Activated CD4-positive, alpha-beta memory T cell treated with anti-CD3 and anti-CD28 coated beads for 36 hours (primary cell): ENCODE measurements at regions of chr6 and their contacts with region 1.

Region 1: GRCh38 chr6:3732345-3733141 is 19.0 kb downstream of the PXDC1 start:
- DNase-seq: peak; percentile 74
- H3K4me3 Mint-ChIP-seq: no peak overlapping the region
- H3K27ac Mint-ChIP-seq: no peak overlapping the region
- H3K4me1 Mint-ChIP-seq: peaks cover 3% of the 10 kb centered on the region
- H3K27me3 Mint-ChIP-seq: peaks cover 8% of the 10 kb centered on the region

Region 2: DNA sequence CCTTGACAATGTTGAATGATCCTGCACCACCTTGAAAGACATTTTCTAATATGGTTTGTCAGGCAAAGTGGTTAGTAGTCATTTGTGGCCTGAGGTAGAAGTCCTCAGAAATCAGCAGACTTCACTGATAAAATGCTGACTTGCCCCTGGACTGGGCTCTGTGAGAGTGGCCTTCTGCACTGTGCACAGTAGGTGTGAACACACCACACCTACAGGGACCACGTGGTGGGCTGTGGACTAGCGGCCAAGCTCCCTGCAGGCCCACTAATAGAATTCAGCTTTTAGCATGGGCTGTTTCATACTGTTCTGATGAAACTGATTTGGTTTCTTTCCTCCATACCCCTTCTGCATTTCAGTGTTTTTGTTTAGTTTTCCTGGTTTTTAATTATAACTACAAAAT is 606.7 kb before region 1 on chr6:
- CTCF ChIA-PET with region 1: no interaction called
- POLR2A ChIA-PET with region 1: no interaction called
- intact Hi-C with region 1: loop called (anchors 2 kb)
- DNase-seq: no peak
- H3K4me3 Mint-ChIP-seq: no peak overlapping the region
- H3K27ac Mint-ChIP-seq: no peak overlapping the region
- H3K4me1 Mint-ChIP-seq: peaks cover 7% of the 10 kb centered on the region
- H3K27me3 Mint-ChIP-seq: no peaks in the 10 kb centered on the region

Region 3: GRCh38 chr6:3273707-3274521 is 458.6 kb before region 1 on chr6:
- CTCF ChIA-PET with region 1: interaction called, 98 read pairs
- POLR2A ChIA-PET with region 1: no interaction called
- intact Hi-C with region 1: loop called (anchors 1 kb)
- DNase-seq: peak; percentile 30
- H3K4me3 Mint-ChIP-seq: no peak overlapping the region
- H3K27ac Mint-ChIP-seq: peak overlapping the region; percentile 44
- H3K4me1 Mint-ChIP-seq: peaks cover 33% of the 10 kb centered on the region
- H3K27me3 Mint-ChIP-seq: no peaks in the 10 kb centered on the region

Region 4: GRCh38 chr6:3281631-3282475 is 450.7 kb before region 1 on chr6:
- CTCF ChIA-PET with region 1: interaction called, 98 read pairs
- POLR2A ChIA-PET with region 1: no interaction called
- intact Hi-C with region 1: loop called (anchors 1 kb)
- DNase-seq: no peak
- H3K4me3 Mint-ChIP-seq: no peak overlapping the region
- H3K27ac Mint-ChIP-seq: no peak overlapping the region
- H3K4me1 Mint-ChIP-seq: no peaks in the 10 kb centered on the region
- H3K27me3 Mint-ChIP-seq: no peaks in the 10 kb centered on the region

Region 5: GRCh38 chr6:3410385-3411360 is 321.9 kb before region 1 on chr6:
- CTCF ChIA-PET with region 1: interaction called, 25 read pairs
- POLR2A ChIA-PET with region 1: no interaction called
- intact Hi-C with region 1: loop called (anchors 2 kb)
- DNase-seq: peak; percentile 67
- H3K4me3 Mint-ChIP-seq: no peak overlapping the region
- H3K27ac Mint-ChIP-seq: no peak overlapping the region
- H3K4me1 Mint-ChIP-seq: peaks cover 5% of the 10 kb centered on the region
- H3K27me3 Mint-ChIP-seq: no peaks in the 10 kb centered on the region

Region 6: GRCh38 chr6:3697609-3698008 is 34.9 kb before region 1 on chr6:
- CTCF ChIA-PET with region 1: no interaction called
- POLR2A ChIA-PET with region 1: no interaction called
- intact Hi-C with region 1: no loop called
- DNase-seq: no peak
- H3K4me3 Mint-ChIP-seq: no peak overlapping the region
- H3K27ac Mint-ChIP-seq: no peak overlapping the region
- H3K4me1 Mint-ChIP-seq: no peaks in the 10 kb centered on the region
- H3K27me3 Mint-ChIP-seq: peaks cover 10% of the 10 kb centered on the region

Region 7: GRCh38 chr6:3710403-3710802 is 22.1 kb before region 1 on chr6:
- CTCF ChIA-PET with region 1: interaction called, 10 read pairs
- POLR2A ChIA-PET with region 1: no interaction called
- intact Hi-C with region 1: no loop called
- DNase-seq: no peak
- H3K4me3 Mint-ChIP-seq: no peak overlapping the region
- H3K27ac Mint-ChIP-seq: no peak overlapping the region
- H3K4me1 Mint-ChIP-seq: no peaks in the 10 kb centered on the region
- H3K27me3 Mint-ChIP-seq: peaks cover 2% of the 10 kb centered on the region

Region 8: GRCh38 chr6:3977875-3978711 is 245.6 kb after region 1 on chr6:
- CTCF ChIA-PET with region 1: interaction called, 16 read pairs
- POLR2A ChIA-PET with region 1: no interaction called
- intact Hi-C with region 1: no loop called
- DNase-seq: peak; percentile 62
- H3K4me3 Mint-ChIP-seq: no peak overlapping the region
- H3K27ac Mint-ChIP-seq: no peak overlapping the region
- H3K4me1 Mint-ChIP-seq: peaks cover 7% of the 10 kb centered on the region
- H3K27me3 Mint-ChIP-seq: peaks cover 1% of the 10 kb centered on the region